ENCODE measurements at regions of chr5 and their contacts with region 1.

Region 1: GRCh38 chr5:139787568-139788293 is 7.9 kb upstream of the PSD2 start:
- DNase-seq: peak; percentile 47 to 86
- H3K4me3 ChIP-seq: peak overlapping the region; percentile 74
- H3K27ac ChIP-seq: no peak overlapping the region
- H3K4me1 ChIP-seq: no peaks in the 10 kb centered on the region
- H3K27me3 ChIP-seq: peaks cover 36% of the 10 kb centered on the region; the same call in 1 of the 2 replicates
- CTCF ChIP-seq: peak; percentile 97

Region 2: DNA sequence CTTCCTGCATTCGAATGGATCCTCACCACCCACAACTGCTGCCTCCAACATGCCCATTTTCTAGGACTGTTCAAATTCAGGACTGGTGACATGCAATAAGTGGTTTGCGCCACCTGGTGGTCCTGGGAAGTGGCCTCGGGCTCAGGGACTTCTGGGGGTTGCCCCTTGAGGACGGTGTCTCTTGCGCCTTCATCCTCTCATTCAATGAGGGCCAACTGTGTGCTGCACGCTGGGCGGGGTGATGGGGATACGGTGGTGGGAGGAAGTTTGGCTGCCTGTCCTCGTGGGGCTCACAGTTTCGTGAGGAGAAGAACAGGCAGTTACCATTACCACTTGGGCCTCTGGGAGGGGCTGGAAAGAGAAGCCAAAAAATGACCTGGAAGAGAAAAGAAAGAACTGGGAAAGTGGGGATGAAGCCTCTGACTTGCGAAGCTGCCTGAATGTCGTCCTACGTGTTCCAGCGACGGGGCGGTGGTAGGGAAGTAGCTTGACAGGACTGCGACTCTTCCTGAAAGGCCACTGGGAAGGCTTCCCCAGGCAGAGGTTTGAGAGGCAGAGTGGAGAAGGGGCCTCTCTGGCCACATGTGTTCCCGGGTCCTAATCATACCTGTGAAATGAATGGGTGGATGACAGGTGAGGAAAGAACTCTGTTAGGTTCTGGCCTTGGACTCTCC is 56.9 kb after region 1 on chr5:
- CTCF ChIA-PET with region 1: interaction called, 3 read pairs
- POLR2A ChIA-PET with region 1: no interaction called
- intact Hi-C with region 1: loop called (anchors 1 kb)
- DNase-seq: peak; percentile 44 to 48
- H3K4me3 ChIP-seq: no peak overlapping the region
- H3K27ac ChIP-seq: no peak overlapping the region
- H3K4me1 ChIP-seq: no peaks in the 10 kb centered on the region
- H3K27me3 ChIP-seq: peaks cover 7% of the 10 kb centered on the region; the same call in 1 of the 2 replicates
- CTCF ChIP-seq: peak; percentile 70

Region 3: DNA sequence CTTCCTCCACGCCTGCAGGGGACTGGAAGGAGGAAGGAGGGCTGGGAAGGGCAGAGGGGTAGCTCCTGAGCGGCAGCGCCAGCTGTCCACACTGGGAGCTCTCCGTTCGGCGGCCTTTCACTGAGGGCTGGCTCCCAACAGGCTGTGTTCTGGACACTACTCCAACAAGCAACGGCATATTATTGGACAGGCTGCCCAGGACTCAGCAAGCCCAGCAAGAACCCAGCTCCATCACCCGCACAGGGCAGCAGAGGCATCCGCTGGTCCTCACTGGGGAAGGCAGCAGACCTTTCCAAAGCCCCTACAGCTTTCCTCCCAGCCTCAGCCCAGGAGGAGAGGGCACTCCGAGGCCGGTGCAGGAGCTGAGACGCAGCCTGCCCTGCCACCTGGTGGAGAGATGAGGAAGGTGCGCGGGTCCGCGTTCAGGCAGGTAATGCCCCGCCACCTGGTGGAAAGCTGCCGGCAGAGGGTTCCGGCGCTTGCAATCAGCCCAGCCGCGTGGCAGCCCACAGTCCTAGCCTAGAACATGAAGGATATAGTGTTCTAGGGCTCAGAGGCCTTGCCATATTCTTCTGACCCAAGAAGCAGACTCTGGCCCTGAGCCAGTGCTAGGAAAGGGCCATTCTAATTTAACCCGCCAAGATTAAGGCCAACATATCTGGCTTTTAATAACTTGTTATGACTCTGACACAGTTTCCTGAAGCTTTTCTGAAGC is 181.0 kb after region 1 on chr5:
- CTCF ChIA-PET with region 1: interaction called, 31 read pairs
- POLR2A ChIA-PET with region 1: no interaction called
- intact Hi-C with region 1: loop called (anchors 1 kb)
- DNase-seq: peak; percentile 57 to 90
- H3K4me3 ChIP-seq: no peak overlapping the region
- H3K27ac ChIP-seq: no peak overlapping the region
- H3K4me1 ChIP-seq: no peaks in the 10 kb centered on the region
- H3K27me3 ChIP-seq: no peaks in the 10 kb centered on the region
- CTCF ChIP-seq: peak; percentile 97

Region 4: DNA sequence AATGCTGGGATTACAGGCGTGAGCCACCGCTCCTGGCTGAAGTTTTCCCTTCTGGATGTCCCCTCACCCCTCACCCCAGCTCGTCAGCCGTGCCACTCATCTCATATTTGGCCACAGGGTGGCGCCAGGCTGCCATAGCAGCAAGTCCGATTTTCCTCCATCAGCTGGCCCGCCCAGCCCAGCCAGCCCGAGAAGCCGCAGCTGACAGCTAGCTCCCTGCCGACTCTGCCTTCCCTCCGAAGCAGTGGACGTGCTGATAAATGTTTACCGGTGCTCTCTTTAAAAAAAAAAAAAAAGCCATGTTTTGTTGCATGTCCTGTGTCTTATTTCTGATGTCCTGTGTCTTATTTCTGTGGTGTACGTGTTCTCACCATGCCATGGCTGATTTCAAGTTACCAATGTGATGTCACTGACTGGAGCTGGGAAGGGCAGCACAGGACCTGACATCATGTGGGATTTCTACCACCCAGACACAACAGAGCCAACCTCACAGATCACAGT is 456.8 kb after region 1 on chr5:
- CTCF ChIA-PET with region 1: no interaction called
- POLR2A ChIA-PET with region 1: no interaction called
- intact Hi-C with region 1: loop called (anchors 10 kb)
- DNase-seq: peak; percentile 77 to 82
- H3K4me3 ChIP-seq: no peak overlapping the region
- H3K27ac ChIP-seq: no peak overlapping the region
- H3K4me1 ChIP-seq: peaks cover 45% of the 10 kb centered on the region
- H3K27me3 ChIP-seq: no peaks in the 10 kb centered on the region
- CTCF ChIP-seq: peak; percentile 91

Measured in PC-9 (cell line).